ENCODE measurements at regions of chr6 and their contacts with region 1.

Region 1: DNA sequence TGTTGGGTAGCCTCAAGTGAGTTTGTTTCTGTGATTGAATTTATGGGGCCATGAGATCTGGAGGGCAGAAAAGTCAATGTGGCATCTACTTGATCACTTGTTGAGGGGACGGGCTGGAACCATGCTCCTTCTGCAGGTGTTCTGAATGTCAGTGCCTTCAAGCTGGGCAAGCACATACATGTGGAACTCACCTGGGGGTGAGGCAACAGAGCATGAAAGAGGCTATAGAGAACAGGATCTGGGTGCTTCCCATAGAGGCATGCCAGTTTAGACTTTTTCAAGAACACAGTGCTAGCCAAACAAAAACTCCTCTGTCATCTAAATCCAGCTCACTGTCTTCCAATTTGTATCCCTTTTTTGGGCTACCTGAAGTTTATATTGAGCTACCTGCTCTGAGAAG is 77.8 kb upstream of the SLC35B3 start:
- DNase-seq: no peak
- H3K4me3 ChIP-seq: no peak overlapping the region
- H3K27ac ChIP-seq: no peak overlapping the region
- H3K4me1 ChIP-seq: no peaks in the 10 kb centered on the region
- H3K27me3 ChIP-seq: no peaks in the 10 kb centered on the region
- CTCF ChIP-seq: no peak
- EP300 ChIP-seq: no peak
- RAD21 ChIP-seq: no peak

Region 2: DNA sequence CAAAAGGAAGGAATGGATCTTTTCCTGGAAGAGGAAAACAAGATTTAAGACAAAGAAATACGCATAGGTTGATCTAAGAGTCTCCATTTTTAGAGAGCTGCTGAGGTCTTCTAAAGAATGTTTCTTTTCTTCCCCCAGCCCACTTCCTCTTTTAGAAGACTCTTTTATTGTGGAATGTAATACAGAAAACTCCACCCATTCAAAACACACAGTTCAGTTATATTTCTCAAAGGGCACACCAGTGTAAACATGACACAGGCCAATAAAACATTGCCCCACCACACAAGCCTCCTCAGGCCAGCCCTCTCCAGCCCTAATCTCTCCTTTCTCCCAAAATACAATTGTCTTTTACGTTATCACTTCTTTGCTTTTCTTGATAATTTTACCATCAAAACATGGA is 120.6 kb before region 1 on chr6:
- CTCF ChIA-PET with region 1: no interaction called
- POLR2A ChIA-PET with region 1: no interaction called
- DNase-seq: no peak
- H3K4me3 ChIP-seq: no peak overlapping the region
- H3K27ac ChIP-seq: no peak overlapping the region
- H3K4me1 ChIP-seq: peaks cover 0 to 6% of the 10 kb centered on the region in 2 experiments; a peak in 2 of 4 replicates
- H3K27me3 ChIP-seq: no peaks in the 10 kb centered on the region
- CTCF ChIP-seq: no peak
- EP300 ChIP-seq: no peak
- RAD21 ChIP-seq: no peak

Region 3: GRCh38 chr6:8499540-8499939 is 13.6 kb before region 1 on chr6:
- CTCF ChIA-PET with region 1: interaction called, 10 read pairs
- POLR2A ChIA-PET with region 1: no interaction called
- DNase-seq: peak; percentile 2
- H3K4me3 ChIP-seq: no peak overlapping the region
- H3K27ac ChIP-seq: no peak overlapping the region
- H3K4me1 ChIP-seq: no peaks in the 10 kb centered on the region
- H3K27me3 ChIP-seq: no peaks in the 10 kb centered on the region
- CTCF ChIP-seq: peak; percentile 31
- EP300 ChIP-seq: no peak
- RAD21 ChIP-seq: peak; percentile 70

Region 4: DNA sequence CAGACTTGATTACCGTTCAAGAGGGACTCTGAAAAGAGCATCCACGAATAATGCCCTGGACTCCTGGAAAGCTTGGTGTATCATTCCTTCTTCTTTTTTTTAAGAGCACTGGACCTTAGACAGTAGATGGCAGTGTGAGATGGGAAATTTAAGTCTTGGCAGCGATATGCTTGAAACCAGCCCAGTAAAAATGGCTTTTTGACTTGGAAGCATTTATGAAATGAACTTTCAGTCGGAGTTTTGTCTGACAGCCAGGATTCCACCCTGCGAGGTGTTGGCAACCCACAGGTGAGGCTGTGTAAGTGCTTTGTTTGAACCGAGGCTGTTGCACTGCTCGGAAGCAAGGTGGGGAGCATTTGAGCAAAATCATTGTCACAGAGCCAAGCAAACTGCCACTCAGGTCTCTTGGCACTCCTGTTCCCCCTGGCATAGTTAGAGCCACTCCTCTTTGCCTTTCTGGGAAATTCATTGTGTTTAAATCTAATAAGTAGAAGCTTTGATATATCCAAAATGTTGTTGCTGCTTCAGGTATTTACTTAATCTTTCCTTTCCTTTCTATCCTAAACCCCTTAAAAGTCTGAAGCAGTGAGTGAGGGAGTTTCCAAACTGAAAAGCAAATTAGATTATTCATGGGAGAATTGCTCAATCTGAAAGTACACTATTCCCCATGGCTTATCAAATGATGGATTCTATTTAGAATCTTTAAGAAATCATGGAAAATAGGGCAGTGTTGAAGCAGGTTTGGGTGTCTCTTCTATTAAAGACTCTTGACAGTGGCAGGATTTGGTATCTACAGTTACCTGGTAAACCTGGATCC is 195.0 kb after region 1 on chr6:
- CTCF ChIA-PET with region 1: no interaction called
- POLR2A ChIA-PET with region 1: no interaction called
- DNase-seq: no peak
- H3K4me3 ChIP-seq: peak overlapping the region in 1 of 2 experiments; percentile 19; a peak in 1 of 4 replicates
- H3K27ac ChIP-seq: no peak overlapping the region
- H3K4me1 ChIP-seq: no peaks in the 10 kb centered on the region; a peak in 1 of 4 replicates
- H3K27me3 ChIP-seq: no peaks in the 10 kb centered on the region
- CTCF ChIP-seq: no peak
- EP300 ChIP-seq: no peak
- RAD21 ChIP-seq: no peak